ENCODE measurements at regions of chr1 and their contacts with region 1.

Region 1: GRCh38 chr1:165073185-165074007 is 283.1 kb downstream of the LMX1A start:
- DNase-seq: peak; percentile 43
- ATAC-seq: peak; percentile 82
- H3K4me3 ChIP-seq: no peak overlapping the region
- H3K27ac ChIP-seq: no peak overlapping the region
- H3K4me1 ChIP-seq: no peaks in the 10 kb centered on the region
- H3K27me3 ChIP-seq: no peaks in the 10 kb centered on the region; a peak in 1 of 5 replicates
- CTCF ChIP-seq: peak; percentile 67
- EP300 ChIP-seq: no peak
- POLR2A ChIP-seq: no peak
- RAD21 ChIP-seq: peak; percentile 24; the same call in 1 of the 2 replicates

Region 2: GRCh38 chr1:163361123-163361934 is 1712.1 kb before region 1 on chr1:
- CTCF ChIA-PET with region 1: interaction called, 6 read pairs
- POLR2A ChIA-PET with region 1: no interaction called
- in situ Hi-C with region 1: no loop called
- intact Hi-C with region 1: loop called (anchors 2 kb)
- DNase-seq: peak; percentile 12
- ATAC-seq: peak; percentile 66
- H3K4me3 ChIP-seq: no peak overlapping the region
- H3K27ac ChIP-seq: no peak overlapping the region
- H3K4me1 ChIP-seq: no peaks in the 10 kb centered on the region
- H3K27me3 ChIP-seq: no peaks in the 10 kb centered on the region
- CTCF ChIP-seq: peak; percentile 61
- EP300 ChIP-seq: no peak
- POLR2A ChIP-seq: no peak
- RAD21 ChIP-seq: no peak

Region 3: DNA sequence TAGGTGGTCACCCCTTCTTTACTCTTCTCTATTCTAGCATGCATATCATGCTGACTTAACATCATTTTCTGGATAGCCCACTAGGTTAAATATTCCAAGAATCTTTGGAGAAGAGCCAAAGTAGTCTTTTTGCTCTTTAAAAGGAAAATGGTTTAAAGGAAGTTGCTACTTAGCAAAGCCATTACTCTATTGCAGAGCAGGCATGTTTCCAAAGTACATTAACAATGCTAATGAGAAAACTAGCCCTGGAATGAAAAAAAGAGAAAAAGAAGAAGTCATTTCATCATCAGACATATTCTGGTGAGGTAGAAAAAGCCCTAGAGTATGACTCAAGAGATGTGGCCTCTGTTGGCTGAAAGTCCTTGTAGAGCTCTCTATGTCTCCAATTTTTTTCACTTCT is 1677.6 kb before region 1 on chr1:
- CTCF ChIA-PET with region 1: no interaction called
- POLR2A ChIA-PET with region 1: no interaction called
- in situ Hi-C with region 1: loop called (anchors 25 kb)
- intact Hi-C with region 1: no loop called
- DNase-seq: no peak
- ATAC-seq: no peak
- H3K4me3 ChIP-seq: no peak overlapping the region
- H3K27ac ChIP-seq: no peak overlapping the region
- H3K4me1 ChIP-seq: no peaks in the 10 kb centered on the region
- H3K27me3 ChIP-seq: no peaks in the 10 kb centered on the region; a peak in 1 of 5 replicates
- CTCF ChIP-seq: no peak
- EP300 ChIP-seq: no peak
- POLR2A ChIP-seq: no peak
- RAD21 ChIP-seq: no peak